MCF 10A (cell line): ENCODE measurements at regions of chr16 and their contacts with region 1.

Region 1: DNA sequence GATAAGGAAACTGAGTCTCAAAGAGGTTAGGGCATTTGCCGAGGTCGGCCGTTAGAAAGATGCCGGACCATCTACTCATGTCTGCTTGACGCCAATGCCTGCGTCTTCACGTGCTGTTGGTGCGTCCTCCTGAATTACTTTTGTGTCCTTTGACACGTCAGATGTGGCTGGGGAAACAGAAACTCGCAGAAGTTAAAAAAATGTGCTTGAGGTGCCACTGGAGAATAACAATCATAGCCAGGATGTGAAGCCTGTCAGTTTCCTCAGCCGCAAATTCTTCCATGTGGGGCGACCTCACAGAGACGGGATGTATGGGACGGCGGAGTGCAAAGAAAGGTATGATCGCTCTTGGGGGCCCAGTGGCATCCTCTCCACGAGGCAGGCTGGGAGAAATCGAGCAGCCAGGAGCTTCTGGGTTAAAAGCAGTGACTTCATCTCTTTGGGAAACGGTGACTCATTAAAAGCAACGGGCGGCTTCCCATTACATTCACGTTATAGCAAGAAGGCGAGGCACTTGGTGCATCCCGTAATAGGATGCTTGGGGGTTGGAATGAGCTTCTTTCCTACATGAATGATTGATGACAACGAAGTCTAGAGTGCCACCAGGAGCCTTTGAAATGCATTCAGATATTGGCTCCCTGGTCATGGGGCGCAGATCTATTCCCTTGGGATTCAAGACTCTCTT is 67.8 kb downstream of the BMERB1 start:
- DNase-seq: peak; percentile 86
- H3K4me3 Mint-ChIP-seq: no peak overlapping the region
- H3K27ac Mint-ChIP-seq: no peak overlapping the region
- H3K4me1 Mint-ChIP-seq: peaks cover 8% of the 10 kb centered on the region
- H3K27me3 Mint-ChIP-seq: peaks cover 9% of the 10 kb centered on the region
- CTCF ChIP-seq: no peak

Region 2: DNA sequence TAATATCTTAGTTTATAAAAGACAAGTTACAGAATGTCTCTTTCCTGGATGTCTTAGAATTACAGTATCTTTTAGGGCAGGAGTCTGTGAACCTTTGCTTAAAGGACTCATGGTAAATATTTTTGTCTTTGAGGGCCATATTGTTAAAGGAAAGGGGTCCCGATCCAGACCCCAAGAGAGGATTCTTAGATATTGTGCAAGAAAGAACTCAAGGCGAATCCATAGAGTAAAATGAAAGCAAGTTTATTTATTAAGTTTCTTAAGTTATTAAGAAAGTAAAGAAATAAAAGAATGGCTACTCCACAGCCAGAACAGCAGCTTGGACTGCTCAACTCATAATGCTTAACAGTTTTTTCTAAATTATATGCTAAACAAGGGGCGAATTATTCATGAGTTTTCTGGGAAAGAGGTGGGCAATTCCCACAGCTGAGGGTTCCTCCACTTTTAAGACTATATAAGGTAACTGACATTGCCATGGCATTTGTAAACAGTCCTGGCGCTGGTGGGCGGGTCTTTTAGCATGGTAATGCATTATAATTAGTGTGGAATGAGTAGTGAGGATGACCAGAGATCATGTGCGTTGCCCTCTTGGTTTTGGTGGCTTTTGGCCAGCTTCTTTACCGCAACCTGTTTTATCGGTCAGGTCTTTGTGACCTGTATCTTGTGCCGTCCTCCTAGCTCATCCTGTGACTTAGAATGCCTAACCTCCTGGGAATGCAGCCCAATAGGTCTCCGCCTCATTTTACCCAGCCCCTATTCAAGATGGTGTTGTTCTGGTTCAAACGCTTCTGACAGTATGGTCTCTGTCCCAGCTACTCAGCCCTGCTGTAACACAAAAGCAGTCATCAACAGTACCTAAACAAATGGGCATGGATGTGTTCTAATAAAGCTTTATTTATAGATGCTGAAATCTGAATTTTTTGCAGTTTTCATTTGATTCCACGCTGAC is 14.6 kb before region 1 on chr16:
- CTCF ChIA-PET with region 1: interaction called, 3 read pairs
- POLR2A ChIA-PET with region 1: no interaction called
- intact Hi-C with region 1: loop called (anchors 1 kb)
- DNase-seq: no peak
- H3K4me3 Mint-ChIP-seq: no peak overlapping the region
- H3K27ac Mint-ChIP-seq: no peak overlapping the region
- H3K4me1 Mint-ChIP-seq: peaks cover 25% of the 10 kb centered on the region
- H3K27me3 Mint-ChIP-seq: no peaks in the 10 kb centered on the region
- CTCF ChIP-seq: no peak

Region 3: DNA sequence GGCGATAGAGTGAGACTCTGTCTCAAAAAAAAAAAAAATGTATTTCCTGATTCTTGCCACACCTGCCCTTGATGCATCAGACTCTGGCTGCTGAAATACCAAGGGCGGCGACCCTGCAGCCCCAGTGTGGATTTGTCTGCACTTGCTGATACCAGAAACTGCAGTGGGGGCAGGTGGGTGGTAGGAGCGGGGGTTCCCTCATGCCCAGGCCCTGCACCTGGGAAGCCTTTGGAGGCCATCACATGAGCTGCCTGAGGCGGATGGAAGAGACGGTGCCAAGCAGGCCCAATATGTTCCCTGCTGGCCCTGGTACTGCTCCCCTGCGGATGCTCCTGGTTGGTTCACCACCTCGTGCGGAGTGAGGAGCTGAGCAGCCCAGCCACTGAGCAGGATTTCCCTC is 90.1 kb after region 1 on chr16:
- CTCF ChIA-PET with region 1: no interaction called
- POLR2A ChIA-PET with region 1: interaction called, 5 read pairs
- intact Hi-C with region 1: loop called (anchors 5 kb)
- DNase-seq: no peak
- H3K4me3 Mint-ChIP-seq: no peak overlapping the region
- H3K27ac Mint-ChIP-seq: no peak overlapping the region
- H3K4me1 Mint-ChIP-seq: peaks cover 17% of the 10 kb centered on the region
- H3K27me3 Mint-ChIP-seq: no peaks in the 10 kb centered on the region
- CTCF ChIP-seq: no peak